ENCODE measurements at regions of chr11 and their contacts with region 1.

Region 1: DNA sequence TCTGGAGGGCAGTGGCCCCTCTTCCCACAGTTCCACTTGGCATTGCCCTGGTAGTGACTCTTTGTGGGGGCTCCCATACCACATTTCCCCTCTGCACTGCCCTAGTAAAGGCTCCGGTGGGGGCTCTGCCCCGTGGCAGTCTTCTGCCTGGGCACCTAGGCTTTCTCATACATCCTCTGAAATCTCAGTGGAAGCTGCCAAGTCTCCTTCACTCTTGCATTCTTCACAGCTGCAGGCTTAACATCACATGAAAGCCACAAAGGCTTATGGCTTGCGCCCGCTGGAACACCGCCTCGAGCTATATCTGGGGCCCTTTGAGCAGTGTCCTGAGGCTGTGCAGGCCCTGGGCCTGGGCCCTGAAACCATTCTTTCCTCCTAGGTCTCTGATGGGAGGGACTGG is 25.3 kb downstream of the PLEKHB1 start:
- DNase-seq: no peak
- ATAC-seq: no peak
- H3K4me3 ChIP-seq: no peak overlapping the region
- H3K4me1 ChIP-seq: no peaks in the 10 kb centered on the region
- CTCF ChIP-seq: no peak

Region 2: GRCh38 chr11:73612601-73613140 is 59.0 kb before region 1 on chr11:
- intact Hi-C with region 1: no loop called
- DNase-seq: no peak
- ATAC-seq: no peak
- H3K4me3 ChIP-seq: no peak overlapping the region
- H3K4me1 ChIP-seq: no peaks in the 10 kb centered on the region
- CTCF ChIP-seq: no peak

Region 3: GRCh38 chr11:73622926-73623593 is 48.6 kb before region 1 on chr11:
- intact Hi-C with region 1: no loop called
- DNase-seq: no peak
- ATAC-seq: no peak
- H3K4me3 ChIP-seq: no peak overlapping the region
- H3K4me1 ChIP-seq: no peaks in the 10 kb centered on the region
- CTCF ChIP-seq: no peak

Region 4: DNA sequence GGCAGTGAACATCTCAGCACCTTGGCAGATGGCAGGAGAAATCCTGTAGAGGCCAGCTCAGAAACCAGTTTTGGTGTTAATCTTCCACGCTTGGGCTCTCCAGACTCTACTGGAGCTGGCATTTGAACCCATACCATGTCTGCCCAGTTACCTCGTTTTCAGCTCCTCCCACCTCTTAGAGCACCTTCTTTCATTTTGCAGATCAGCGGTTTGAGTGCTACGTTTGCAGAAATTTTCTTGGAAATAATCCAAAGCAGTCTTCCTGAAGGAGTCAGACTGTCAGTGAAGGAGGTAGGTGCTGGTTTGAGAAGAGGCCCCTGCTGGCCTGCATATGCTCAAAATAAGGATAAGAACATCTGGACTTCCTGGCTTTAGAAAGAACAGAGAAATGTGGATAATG is 191.3 kb after region 1 on chr11:
- intact Hi-C with region 1: loop called in 1 of 2 experiments (anchors 5 kb)
- DNase-seq: no peak
- ATAC-seq: no peak
- H3K4me3 ChIP-seq: no peak overlapping the region
- H3K4me1 ChIP-seq: no peaks in the 10 kb centered on the region
- CTCF ChIP-seq: no peak